ENCODE measurements at regions of chr17 and their contacts with region 1.

Region 1: GRCh38 chr17:8409966-8410864 is 12.6 kb upstream of the RNF222 start:
- DNase-seq: peak; percentile 82 to 97 (median 91)

Region 2: DNA sequence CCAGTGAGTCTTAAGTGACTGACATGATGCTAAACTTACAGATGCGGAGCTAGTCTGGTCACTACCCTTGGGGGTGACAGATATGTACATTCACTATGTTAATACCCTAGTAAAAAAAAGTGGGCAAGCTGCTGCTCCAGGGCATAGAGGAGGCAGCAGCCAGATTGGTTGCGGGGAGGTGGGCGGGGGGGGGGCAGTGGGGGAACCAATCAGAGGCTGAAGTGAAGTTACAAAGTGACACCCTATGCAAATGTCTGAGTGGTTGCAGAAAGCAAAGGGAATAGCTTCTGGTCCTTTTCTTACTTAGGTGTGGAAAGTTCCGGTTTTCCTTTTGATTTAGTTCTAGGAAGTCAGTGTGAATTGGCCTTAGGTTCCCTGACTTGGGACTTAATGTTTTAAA is 37.6 kb after region 1 on chr17:
- intact Hi-C with region 1: no loop called
- DNase-seq: no peak

Region 3: DNA sequence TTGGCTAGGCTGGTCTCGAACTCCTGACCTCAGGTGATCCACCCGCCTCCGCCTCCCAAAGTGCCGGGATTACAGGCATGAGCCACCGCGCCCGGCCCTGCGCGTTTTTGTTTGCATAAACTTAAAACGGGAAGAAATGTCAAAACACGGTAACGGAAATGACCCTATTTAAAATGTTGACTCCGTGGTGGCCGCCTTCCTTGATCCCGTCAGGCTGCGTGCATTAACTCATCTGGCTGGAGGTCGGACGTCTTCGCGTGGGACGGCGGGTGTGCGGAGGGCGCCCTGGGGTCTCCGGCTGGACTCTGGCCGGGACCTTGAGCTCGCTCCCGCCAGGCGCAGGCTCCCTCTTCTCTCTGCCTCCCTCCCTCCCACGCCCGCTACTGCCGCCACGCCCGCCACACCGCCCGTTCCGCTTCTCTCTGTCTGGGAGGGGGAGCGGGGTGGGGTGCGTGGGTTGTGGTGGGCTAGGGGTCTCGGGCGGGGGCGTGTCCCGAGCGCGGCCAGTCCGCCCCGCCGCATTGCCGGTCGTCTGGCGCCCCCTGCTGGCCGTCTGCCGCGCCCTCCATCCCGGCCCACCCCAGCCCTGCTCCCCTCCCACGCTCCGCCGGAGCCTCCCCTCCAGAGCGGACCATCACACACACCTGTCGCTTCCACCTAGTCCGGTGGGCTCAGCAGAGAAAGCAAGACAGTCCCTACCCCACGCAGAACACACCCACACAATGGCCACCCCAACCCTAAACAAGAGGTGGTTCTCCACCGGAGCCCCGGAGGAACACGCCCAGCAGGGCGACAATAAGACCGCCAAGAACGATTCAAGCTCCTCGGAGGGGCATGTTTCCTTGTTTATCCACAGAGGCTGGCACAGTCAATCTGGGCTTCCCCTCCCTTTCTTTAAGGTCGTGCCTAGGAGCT is 335.6 kb after region 1 on chr17:
- intact Hi-C with region 1: loop called (anchors 2 kb)
- DNase-seq: peak; percentile 8 to 89 (median 74)